H1 (cell line): ENCODE measurements at regions of chr9 and their contacts with region 1.

Region 1: GRCh38 chr9:120348951-120349429 is 231.0 kb downstream of the CDK5RAP2 start:
- DNase-seq: peak; percentile 47 to 70
- H3K4me3 ChIP-seq: peak overlapping the region in 1 of 4 experiments; percentile 29; a peak in 1 of 8 replicates
- H3K27ac ChIP-seq: no peak overlapping the region
- H3K4me1 ChIP-seq: peaks cover 3 to 12% (median 5%) of the 10 kb centered on the region in 4 experiments; a peak in 6 of 7 replicates
- H3K27me3 ChIP-seq: no peaks in the 10 kb centered on the region
- CTCF ChIP-seq: peak; percentile 74 to 88 (median 81)
- EP300 ChIP-seq: 0 out of 3 replicates have a peak, but pooled peaks of 1 of the 2 experiments have one; percentile 5
- POLR2A ChIP-seq: no peak
- RAD21 ChIP-seq: peak; percentile 91 to 93

Region 2: DNA sequence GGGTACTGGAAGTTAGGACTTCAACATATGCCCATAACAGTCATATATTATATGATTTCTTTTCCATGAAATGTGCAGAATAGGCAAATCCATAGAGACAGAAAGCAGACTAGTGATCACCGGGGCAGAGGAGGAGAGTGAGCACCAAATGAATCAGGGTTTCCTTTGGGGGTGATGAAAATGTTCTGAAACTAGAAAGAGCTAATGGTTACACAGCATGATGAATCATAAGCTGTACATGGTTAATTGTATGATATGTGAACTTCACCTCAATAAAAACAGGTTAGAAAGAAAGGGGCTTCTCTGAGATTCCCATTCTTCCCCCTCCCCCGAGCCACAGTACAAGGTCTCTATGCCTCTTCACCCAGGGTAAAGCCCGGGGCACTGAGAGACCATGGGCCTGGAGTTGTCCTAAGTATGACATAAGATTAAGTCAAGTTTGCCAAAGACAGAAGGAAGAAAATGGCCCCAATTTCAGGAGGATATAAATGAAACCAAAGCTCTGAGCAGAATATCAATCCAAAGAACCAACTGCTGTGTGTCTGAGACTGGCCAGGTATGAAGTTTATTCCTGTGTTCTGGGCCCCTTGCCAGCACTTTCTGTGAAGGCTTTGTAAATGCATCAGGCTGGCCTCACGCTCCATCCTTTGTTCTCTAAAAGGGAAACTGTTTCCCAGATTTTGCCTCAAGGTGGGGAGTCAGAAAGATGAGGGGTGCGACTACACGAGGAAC is 12.8 kb before region 1 on chr9:
- CTCF ChIA-PET with region 1: interaction called, 30 read pairs
- POLR2A ChIA-PET with region 1: no interaction called
- DNase-seq: peak in 1 of 2 experiments; percentile 17
- H3K4me3 ChIP-seq: no peak overlapping the region
- H3K27ac ChIP-seq: no peak overlapping the region
- H3K4me1 ChIP-seq: no peaks in the 10 kb centered on the region
- H3K27me3 ChIP-seq: no peaks in the 10 kb centered on the region
- CTCF ChIP-seq: no peak
- EP300 ChIP-seq: no peak
- POLR2A ChIP-seq: no peak
- RAD21 ChIP-seq: no peak

Region 3: DNA sequence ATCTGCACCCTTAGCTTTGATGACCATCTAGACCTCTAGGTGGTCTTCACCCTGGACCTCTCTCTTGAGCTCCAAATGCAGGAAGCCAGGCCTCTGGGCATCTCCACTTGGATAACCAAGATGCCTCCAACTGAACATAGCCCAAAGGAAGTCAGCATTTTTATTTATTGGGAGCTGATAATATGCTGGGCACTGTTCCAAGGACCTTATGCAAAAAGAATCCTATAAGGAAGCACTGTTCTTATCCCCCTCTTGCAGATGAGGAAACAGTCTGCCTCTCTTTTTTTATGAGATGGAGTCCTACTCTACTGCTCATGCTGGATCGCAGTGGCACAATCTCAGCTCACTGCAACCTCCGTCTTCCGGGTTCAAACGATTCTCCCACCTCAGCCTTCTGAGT is 11.1 kb after region 1 on chr9:
- CTCF ChIA-PET with region 1: interaction called, 13 read pairs
- POLR2A ChIA-PET with region 1: interaction called, 4 read pairs
- DNase-seq: no peak
- H3K4me3 ChIP-seq: no peak overlapping the region
- H3K27ac ChIP-seq: no peak overlapping the region
- H3K4me1 ChIP-seq: no peaks in the 10 kb centered on the region
- H3K27me3 ChIP-seq: no peaks in the 10 kb centered on the region
- CTCF ChIP-seq: no peak
- EP300 ChIP-seq: no peak
- POLR2A ChIP-seq: no peak
- RAD21 ChIP-seq: no peak